Heart right ventricle (tissue), 16 donors: ENCODE measurements at regions of chr1 and their contacts with region 1.

Region 1: GRCh38 chr1:229620876-229621275 is 5.0 kb downstream of the TAF5L start:
- DNase-seq: no peak
- ATAC-seq: peak in 2 of 8 donors; percentile 53 to 62
- H3K4me3 ChIP-seq: no peak overlapping the region
- H3K27ac ChIP-seq: no peak overlapping the region
- H3K4me1 ChIP-seq: peaks cover 11 to 77% (median 34%) of the 10 kb centered on the region in 9 donors
- H3K27me3 ChIP-seq: no peaks in the 10 kb centered on the region
- CTCF ChIP-seq: no peak

Region 2: DNA sequence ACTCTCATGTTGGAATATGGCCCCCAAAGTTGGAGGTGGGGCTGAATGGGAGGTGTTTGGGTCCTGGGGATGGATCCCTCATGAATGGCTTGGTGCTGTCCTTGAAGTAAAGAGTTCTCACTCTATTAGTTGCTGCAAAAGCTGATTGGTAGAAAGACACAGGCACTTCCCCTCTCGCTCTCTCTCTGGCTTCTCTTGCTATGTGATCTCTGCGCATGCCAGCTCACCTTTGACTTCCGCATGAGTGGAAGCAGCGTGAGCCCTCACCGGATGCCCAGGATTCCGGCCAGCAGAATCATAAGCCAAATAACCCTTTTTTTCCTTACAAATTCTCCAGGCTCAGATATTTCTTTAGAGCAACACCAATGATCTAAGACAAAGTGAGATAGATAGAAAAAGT is 257.2 kb before region 1 on chr1:
- intact Hi-C with region 1: no loop called
- DNase-seq: no peak
- ATAC-seq: no peak
- H3K4me3 ChIP-seq: no peak overlapping the region
- H3K27ac ChIP-seq: no peak overlapping the region
- H3K4me1 ChIP-seq: no peaks in the 10 kb centered on the region
- H3K27me3 ChIP-seq: peaks cover 0 to 46% (median 29%) of the 10 kb centered on the region in 7 donors
- CTCF ChIP-seq: no peak

Region 3: GRCh38 chr1:229579059-229579673 is 41.7 kb before region 1 on chr1:
- intact Hi-C with region 1: loop called in 1 of 10 experiments (anchors 5 kb)
- DNase-seq: peak; percentile 57 to 71
- ATAC-seq: peak; percentile 76 to 92 (median 88)
- H3K4me3 ChIP-seq: peak overlapping the region in 6 of 10 donors; percentile 3 to 32 (median 23)
- H3K27ac ChIP-seq: peak overlapping the region in 9 of 10 donors; percentile 42 to 81 (median 66)
- H3K4me1 ChIP-seq: peaks cover 9 to 39% (median 28%) of the 10 kb centered on the region in 9 donors
- H3K27me3 ChIP-seq: no peaks in the 10 kb centered on the region
- CTCF ChIP-seq: no peak

Region 4: DNA sequence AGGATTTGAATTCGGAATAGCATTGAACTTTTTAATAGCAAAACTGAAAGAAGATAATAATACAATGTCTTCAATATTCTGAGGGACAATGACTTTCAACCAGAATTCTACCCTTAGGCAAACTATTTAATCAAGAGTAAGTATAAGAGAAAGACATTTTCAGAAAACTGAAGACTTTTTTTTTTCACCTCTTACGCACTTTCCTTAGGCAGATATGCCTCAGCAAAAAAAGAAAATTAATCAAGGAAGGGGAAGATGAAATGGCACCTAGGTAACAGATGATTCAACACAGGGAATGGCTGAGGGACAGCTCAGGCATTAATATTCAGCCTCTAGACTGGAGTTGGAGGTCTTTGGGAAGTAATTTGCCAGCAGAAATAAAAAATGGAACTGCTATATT is 190.1 kb after region 1 on chr1:
- intact Hi-C with region 1: no loop called
- DNase-seq: no peak
- ATAC-seq: no peak
- H3K4me3 ChIP-seq: no peak overlapping the region
- H3K27ac ChIP-seq: no peak overlapping the region
- H3K4me1 ChIP-seq: no peaks in the 10 kb centered on the region
- H3K27me3 ChIP-seq: peaks cover 0 to 5% (median 0%) of the 10 kb centered on the region in 7 donors
- CTCF ChIP-seq: no peak